Activated T-helper 2 cell treated with anti-CD3 and anti-CD28 coated beads, Interferon-gamma antibody, Interleukin-2, Interleukin-4, amounts not matched to agents 10 μg/mL and 5 μg/mL and 100 μg/mL, durations not matched to agents 14 hours and 24 hours and 36 hours (primary cell): ENCODE measurements at regions of chr1 and their contacts with region 1.

Region 1: GRCh38 chr1:187408212-187409003 is 579.7 kb downstream of the PLA2G4A start:
- DNase-seq: no peak
- H3K4me3 Mint-ChIP-seq: no peak overlapping the region
- H3K27ac Mint-ChIP-seq: no peak overlapping the region
- H3K4me1 Mint-ChIP-seq: peaks cover 12% of the 10 kb centered on the region
- H3K27me3 Mint-ChIP-seq: no peaks in the 10 kb centered on the region

Region 2: GRCh38 chr1:187326557-187326956 is 81.9 kb before region 1 on chr1:
- intact Hi-C with region 1: no loop called
- DNase-seq: no peak
- H3K4me3 Mint-ChIP-seq: no peak overlapping the region
- H3K27ac Mint-ChIP-seq: no peak overlapping the region
- H3K4me1 Mint-ChIP-seq: no peaks in the 10 kb centered on the region
- H3K27me3 Mint-ChIP-seq: no peaks in the 10 kb centered on the region

Region 3: DNA sequence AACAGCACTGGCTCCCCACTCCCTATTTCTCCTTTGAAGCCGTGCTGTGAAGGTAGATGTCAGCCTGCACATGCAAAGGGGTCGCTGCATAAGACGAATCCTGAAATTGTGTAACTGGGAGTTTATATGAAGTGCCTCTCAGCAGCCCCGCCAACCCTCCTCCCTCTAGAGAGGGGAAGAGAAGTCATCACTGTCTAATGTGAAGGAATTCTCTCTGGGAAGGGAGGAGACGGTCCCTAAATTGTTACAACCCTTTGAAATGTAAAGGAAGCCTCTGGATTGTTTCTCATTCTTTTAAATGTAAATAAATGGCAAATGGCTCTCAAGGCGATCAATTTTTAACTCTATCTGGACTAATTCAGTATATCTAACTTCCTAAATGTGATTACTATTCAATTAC is 34.3 kb before region 1 on chr1:
- intact Hi-C with region 1: no loop called
- DNase-seq: no peak
- H3K4me3 Mint-ChIP-seq: no peak overlapping the region
- H3K27ac Mint-ChIP-seq: no peak overlapping the region
- H3K4me1 Mint-ChIP-seq: no peaks in the 10 kb centered on the region
- H3K27me3 Mint-ChIP-seq: no peaks in the 10 kb centered on the region

Region 4: GRCh38 chr1:187384504-187384903 is 23.9 kb before region 1 on chr1:
- intact Hi-C with region 1: loop called (anchors 2 kb)
- DNase-seq: no peak
- H3K4me3 Mint-ChIP-seq: no peak overlapping the region
- H3K27ac Mint-ChIP-seq: no peak overlapping the region
- H3K4me1 Mint-ChIP-seq: peaks cover 2% of the 10 kb centered on the region
- H3K27me3 Mint-ChIP-seq: no peaks in the 10 kb centered on the region